CD8-positive, alpha-beta T cell (primary cell): ENCODE measurements at regions of chr15 and their contacts with region 1.

Region 1: GRCh38 chr15:65666257-65666656 is 44.5 kb downstream of the SLC24A1 start:
- DNase-seq: no peak
- ATAC-seq: no peak
- H3K4me3 ChIP-seq: no peak overlapping the region
- H3K4me3 Mint-ChIP-seq: no peak overlapping the region
- H3K27ac ChIP-seq: no peak overlapping the region
- H3K27ac Mint-ChIP-seq: no peak overlapping the region
- H3K4me1 ChIP-seq: no peaks in the 10 kb centered on the region
- H3K4me1 Mint-ChIP-seq: no peaks in the 10 kb centered on the region
- H3K27me3 ChIP-seq: no peaks in the 10 kb centered on the region
- H3K27me3 Mint-ChIP-seq: no peaks in the 10 kb centered on the region
- CTCF ChIP-seq: no peak

Region 2: GRCh38 chr15:65476903-65477302 is 189.4 kb before region 1 on chr15:
- CTCF ChIA-PET with region 1: no interaction called
- POLR2A ChIA-PET with region 1: no interaction called
- intact Hi-C with region 1: no loop called
- DNase-seq: no peak
- ATAC-seq: no peak
- H3K4me3 ChIP-seq: no peak overlapping the region
- H3K4me3 Mint-ChIP-seq: no peak overlapping the region
- H3K27ac ChIP-seq: no peak overlapping the region
- H3K27ac Mint-ChIP-seq: peak overlapping the region; percentile 45
- H3K4me1 ChIP-seq: no peaks in the 10 kb centered on the region
- H3K4me1 Mint-ChIP-seq: no peaks in the 10 kb centered on the region
- H3K27me3 ChIP-seq: no peaks in the 10 kb centered on the region
- H3K27me3 Mint-ChIP-seq: no peaks in the 10 kb centered on the region
- CTCF ChIP-seq: no peak

Region 3: DNA sequence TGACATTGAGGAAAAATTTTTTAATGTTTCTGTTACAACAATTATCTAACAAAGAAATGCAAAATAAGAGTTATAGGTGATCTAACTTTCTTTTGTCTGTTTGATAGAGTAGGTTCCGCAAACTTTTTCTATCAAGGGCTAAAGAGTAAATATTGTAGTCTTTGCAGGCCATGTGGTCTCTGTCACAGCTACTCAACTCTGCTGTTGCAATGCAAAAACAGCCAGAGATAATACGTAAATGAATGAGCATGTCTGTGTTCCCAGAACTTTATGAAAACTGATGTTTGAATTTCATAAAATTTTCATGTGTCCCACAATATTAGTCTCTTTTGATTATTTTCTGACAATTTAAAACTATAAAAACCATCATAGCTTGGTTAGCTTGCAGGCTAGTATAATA is 28.8 kb after region 1 on chr15:
- CTCF ChIA-PET with region 1: no interaction called
- POLR2A ChIA-PET with region 1: no interaction called
- intact Hi-C with region 1: loop called in 1 of 2 experiments (anchors 2 kb)
- DNase-seq: no peak
- ATAC-seq: no peak
- H3K4me3 ChIP-seq: no peak overlapping the region
- H3K4me3 Mint-ChIP-seq: no peak overlapping the region
- H3K27ac ChIP-seq: no peak overlapping the region
- H3K27ac Mint-ChIP-seq: no peak overlapping the region
- H3K4me1 ChIP-seq: no peaks in the 10 kb centered on the region
- H3K4me1 Mint-ChIP-seq: no peaks in the 10 kb centered on the region
- H3K27me3 ChIP-seq: no peaks in the 10 kb centered on the region
- H3K27me3 Mint-ChIP-seq: no peaks in the 10 kb centered on the region
- CTCF ChIP-seq: no peak

Region 4: GRCh38 chr15:65916664-65917406 is 250.6 kb after region 1 on chr15:
- CTCF ChIA-PET with region 1: no interaction called
- POLR2A ChIA-PET with region 1: no interaction called
- intact Hi-C with region 1: no loop called
- DNase-seq: peak in 2 of 9 experiments; percentile 38 to 66
- ATAC-seq: peak; percentile 40
- H3K4me3 ChIP-seq: no peak overlapping the region
- H3K4me3 Mint-ChIP-seq: no peak overlapping the region
- H3K27ac ChIP-seq: no peak overlapping the region
- H3K27ac Mint-ChIP-seq: no peak overlapping the region
- H3K4me1 ChIP-seq: no peaks in the 10 kb centered on the region
- H3K4me1 Mint-ChIP-seq: no peaks in the 10 kb centered on the region
- H3K27me3 ChIP-seq: no peaks in the 10 kb centered on the region
- H3K27me3 Mint-ChIP-seq: no peaks in the 10 kb centered on the region
- CTCF ChIP-seq: no peak